ENCODE measurements at regions of chr2 and their contacts with region 1.

Region 1: GRCh38 chr2:200864176-200864976 is at the start of gene CLK1:
- DNase-seq: peak; percentile 99
- ATAC-seq: peak; percentile 96 to 97
- H3K4me3 ChIP-seq: peak within 1 kb of the TSS; percentile 94
- H3K27ac ChIP-seq: peak within 1 kb of the TSS; percentile 100
- H3K4me1 ChIP-seq: peaks cover 50% of the 10 kb centered on the region
- H3K27me3 ChIP-seq: no peaks in the 10 kb centered on the region
- CTCF ChIP-seq: no peak
- total RNA-seq, gene CLK1: 132 TPM

Region 2: DNA sequence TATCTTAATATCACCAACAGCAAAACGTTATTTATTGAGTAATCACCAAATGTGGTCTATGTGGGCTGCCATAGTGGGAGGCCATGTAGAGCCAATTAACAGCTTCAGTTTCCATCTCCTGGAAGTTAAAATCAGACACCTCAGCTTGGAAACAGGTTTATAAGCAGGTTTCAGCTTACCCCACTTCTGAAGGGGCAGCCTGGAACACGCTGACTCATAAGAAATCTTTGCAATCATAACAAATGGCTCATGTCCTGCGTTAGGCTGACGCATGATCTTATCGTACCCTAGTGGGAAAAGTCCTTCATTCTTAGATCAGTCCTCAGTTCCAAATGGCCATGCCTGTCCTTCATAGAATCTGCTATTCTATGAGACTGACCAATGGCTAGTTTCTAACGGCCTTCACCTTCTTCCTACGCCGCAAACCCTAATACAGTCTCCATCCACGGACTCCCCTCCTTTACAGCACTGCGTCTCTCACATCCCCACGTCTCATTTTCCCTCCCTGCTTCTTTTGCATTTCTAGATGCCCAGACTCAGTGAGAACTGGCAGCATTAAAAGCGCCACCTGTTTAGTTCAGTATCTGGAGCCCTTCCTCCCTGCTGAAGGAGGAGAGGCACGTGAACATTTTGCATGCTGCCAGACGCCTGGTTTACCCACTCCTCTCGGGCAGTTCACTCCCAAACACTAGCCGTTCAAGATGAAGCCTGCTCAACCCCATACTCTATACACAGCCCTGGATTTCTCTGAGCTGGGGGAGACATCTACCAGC is 76.8 kb before region 1 on chr2:
- intact Hi-C with region 1: no loop called
- DNase-seq: no peak
- ATAC-seq: peak; percentile 65 to 70
- H3K4me3 ChIP-seq: no peak overlapping the region
- H3K27ac ChIP-seq: no peak overlapping the region
- H3K4me1 ChIP-seq: no peaks in the 10 kb centered on the region
- H3K27me3 ChIP-seq: no peaks in the 10 kb centered on the region
- CTCF ChIP-seq: no peak

Region 3: GRCh38 chr2:200798514-200798913 is 65.9 kb before region 1 on chr2:
- intact Hi-C with region 1: no loop called
- DNase-seq: no peak
- ATAC-seq: no peak
- H3K4me3 ChIP-seq: no peak overlapping the region
- H3K27ac ChIP-seq: no peak overlapping the region
- H3K4me1 ChIP-seq: peaks cover 13% of the 10 kb centered on the region
- H3K27me3 ChIP-seq: no peaks in the 10 kb centered on the region
- CTCF ChIP-seq: no peak

Region 4: DNA sequence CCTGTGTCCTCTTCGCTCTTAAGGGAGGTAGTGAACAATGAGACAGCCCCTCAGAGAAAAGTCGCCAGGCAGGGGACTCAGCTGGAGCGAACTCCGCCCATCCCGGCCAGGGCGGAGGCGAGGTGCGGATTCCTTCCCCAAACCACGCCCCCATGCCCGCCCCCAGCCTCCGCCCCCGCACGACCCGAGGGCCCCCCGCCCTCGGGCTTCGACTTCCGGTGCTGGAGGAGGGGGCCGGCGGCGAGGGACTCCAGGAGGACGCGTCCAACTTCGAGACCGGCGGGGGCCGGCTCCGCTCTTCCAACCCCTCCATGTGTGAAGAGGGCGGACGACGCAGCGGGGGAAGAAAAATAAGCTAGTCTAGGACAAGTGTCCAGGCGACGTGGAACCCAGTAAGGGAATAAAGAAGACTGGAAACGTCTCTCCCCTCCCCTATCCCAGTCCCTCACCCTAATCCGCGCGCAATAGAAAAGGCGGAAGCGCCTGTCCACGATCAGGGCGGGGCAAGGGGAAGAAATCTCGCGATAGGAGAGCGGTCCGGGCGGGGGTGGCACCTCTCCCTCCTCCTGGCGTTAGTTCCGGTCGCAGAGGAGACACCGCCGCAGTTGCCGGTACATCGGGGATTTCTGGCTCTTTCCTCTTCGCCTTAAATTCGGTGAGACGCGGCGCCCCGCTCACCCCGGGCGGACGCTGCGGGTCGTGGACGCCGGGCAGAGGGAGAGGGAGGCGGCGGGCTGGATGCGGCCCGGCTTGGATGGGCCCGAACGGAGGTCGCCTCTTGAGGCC is 52.8 kb before region 1 on chr2 and contains the start of gene BZW1:
- intact Hi-C with region 1: loop called (anchors 10 kb)
- DNase-seq: peak; percentile 96
- ATAC-seq: peak; percentile 97
- H3K4me3 ChIP-seq: peak within 1 kb of the TSS; percentile 86
- H3K27ac ChIP-seq: peak within 1 kb of the TSS; percentile 99
- H3K4me1 ChIP-seq: peaks cover 41% of the 10 kb centered on the region
- H3K27me3 ChIP-seq: no peaks in the 10 kb centered on the region
- CTCF ChIP-seq: no peak
- total RNA-seq, gene BZW1: 154 TPM

Region 5: DNA sequence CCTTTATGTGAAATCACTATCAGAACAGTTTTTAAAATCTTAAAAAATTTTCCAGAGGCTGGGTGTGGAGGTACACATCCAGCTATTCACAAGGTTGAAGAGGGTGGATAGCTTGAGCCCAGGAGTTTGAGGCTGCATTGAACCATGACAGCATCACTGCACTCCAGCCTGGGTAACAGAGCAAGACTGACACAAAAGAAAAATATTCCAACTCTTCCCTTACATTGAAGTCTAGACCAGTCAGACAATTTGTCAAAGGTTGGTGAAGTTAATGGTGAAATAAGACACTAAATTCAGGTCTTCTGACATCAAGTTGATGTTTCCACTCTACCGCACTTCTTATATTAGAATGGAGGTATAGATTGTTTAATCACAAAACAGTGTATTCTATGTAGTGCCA is 154.3 kb after region 1 on chr2:
- intact Hi-C with region 1: no loop called
- DNase-seq: no peak
- ATAC-seq: no peak
- H3K4me3 ChIP-seq: no peak overlapping the region
- H3K27ac ChIP-seq: no peak overlapping the region
- H3K4me1 ChIP-seq: no peaks in the 10 kb centered on the region
- H3K27me3 ChIP-seq: no peaks in the 10 kb centered on the region
- CTCF ChIP-seq: no peak